Left cardiac atrium (tissue), 4 donors: ENCODE measurements at regions of chr9 and their contacts with region 1.

Region 1: DNA sequence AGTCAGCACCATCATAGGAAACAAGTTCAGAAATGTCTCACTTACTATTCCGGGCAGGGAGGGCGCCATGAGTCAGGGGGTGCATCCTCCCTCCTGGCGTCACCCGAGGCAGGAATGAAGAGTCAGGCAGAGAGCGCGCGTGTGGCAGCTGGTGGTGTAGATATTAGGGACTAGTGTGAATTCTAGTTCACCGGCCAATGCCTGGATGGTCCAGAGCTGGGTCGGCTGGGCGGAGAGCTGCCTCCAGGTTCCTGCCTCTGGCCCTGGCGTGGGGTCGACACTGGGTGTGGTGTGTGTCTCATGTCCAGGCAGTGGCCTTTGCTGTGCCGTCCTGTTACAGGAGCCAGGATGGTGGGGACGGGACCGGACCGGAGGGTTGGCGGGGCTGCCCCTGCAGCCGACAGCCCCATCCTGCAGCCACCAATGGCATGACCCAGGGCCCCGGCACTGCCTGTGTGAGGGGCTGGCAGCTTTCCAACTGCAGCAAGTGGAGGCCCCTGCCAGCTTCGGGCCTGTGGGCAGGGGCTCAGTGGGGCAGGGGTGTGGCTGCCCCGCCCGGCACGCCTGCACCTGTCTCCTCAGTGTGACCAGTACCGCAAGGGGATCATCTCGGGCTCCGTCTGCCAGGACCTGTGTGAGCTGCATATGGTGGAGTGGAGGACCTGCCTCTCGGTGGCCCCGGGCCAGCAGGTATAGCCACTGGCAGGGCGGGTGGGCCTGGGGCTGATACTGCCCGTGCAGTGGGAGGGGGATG is 9.1 kb downstream of the DIPK1B start:
- DNase-seq: peak; percentile 80
- ATAC-seq: peak; percentile 48 to 65

Region 2: DNA sequence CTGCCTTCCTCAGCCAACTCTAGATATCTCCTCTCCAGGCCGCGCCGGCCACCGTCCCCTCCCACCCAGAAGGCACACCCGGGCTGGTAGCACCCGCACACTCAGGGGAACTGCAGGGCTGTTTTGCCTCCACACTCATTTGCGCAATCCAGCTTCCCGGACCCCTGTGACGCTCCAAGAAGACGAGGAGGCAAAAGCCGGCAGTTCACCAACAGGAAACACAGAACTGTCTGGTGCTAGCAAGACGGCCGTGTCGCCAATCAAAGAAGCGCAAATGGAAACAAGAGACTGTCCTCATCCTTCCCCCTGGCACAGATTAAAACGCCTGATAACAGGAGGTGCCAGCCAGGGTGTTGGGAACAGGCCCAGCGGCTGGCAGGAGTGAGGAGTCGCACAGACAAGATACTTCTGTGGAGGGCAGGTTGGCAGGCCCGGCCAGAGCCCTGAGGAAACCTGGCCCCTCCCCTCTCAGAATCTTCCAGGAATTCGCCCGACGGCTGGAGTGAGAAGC is 42.0 kb before region 1 on chr9:
- intact Hi-C with region 1: loop called in 1 of 2 experiments (anchors 5 kb)
- DNase-seq: peak; percentile 80
- ATAC-seq: peak; percentile 42 to 43

Region 3: DNA sequence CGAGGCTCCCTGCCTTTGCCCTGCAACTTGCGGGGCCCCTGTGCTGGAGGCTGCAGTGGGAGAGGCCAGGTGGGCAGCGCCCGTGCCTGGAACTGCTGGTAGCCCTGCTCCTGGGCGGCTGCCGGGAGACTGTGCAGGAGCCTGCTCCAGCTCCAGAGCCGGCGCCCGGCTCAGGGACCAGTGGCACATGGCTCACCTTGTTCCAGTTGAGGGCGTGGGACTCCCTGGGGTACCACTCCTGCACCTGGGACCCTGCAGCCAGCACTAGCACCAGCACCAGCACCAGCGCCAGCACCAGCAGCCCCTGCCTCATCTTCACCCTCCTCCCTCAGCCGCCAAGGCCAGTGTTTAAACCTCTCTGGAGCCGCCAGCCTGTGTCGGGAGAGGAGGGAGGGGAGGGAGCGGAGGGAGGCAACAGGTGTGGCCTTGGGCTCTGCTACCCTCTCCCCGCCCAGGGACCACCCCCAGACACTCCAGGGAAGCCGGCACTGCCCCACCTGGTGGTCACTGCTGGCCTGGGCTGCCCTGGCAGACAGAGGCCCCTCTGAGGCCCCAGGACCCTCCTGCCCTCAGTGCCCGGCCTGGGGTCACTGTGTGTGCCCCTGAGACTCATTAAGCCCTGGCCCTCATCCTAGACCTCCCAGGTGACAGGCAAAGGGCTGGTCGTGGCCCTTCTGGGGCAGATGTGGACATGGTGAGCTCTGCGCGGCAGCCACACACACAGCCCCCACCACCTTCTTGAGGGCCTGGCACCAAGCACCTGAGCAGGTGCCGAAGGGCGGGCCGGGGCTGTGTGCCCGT is 21.3 kb after region 1 on chr9 and contains the start of gene LCN10:
- intact Hi-C with region 1: no loop called
- DNase-seq: no peak
- ATAC-seq: peak in 1 of 2 donors; percentile 8
- total RNA-seq, gene LCN10: 9.3 to 20.1 TPM

Region 4: GRCh38 chr9:136790927-136791641 is 69.6 kb after region 1 on chr9 and contains the start of gene TMEM141:
- intact Hi-C with region 1: no loop called
- DNase-seq: peak; percentile 100
- ATAC-seq: peak; percentile 95 to 96
- total RNA-seq, gene TMEM141: 81.1 to 85.7 TPM